Vagina (tissue), 2 donors: ENCODE measurements at regions of chr1 and their contacts with region 1.

Region 1: GRCh38 chr1:30618335-30618747 is 105.0 kb downstream of the MATN1 start:
- DNase-seq: no peak
- H3K4me3 ChIP-seq: no peak overlapping the region
- H3K27ac ChIP-seq: no peak overlapping the region
- H3K4me1 ChIP-seq: no peaks in the 10 kb centered on the region
- H3K27me3 ChIP-seq: no peaks in the 10 kb centered on the region
- CTCF ChIP-seq: no peak
- POLR2A ChIP-seq: no peak

Region 2: DNA sequence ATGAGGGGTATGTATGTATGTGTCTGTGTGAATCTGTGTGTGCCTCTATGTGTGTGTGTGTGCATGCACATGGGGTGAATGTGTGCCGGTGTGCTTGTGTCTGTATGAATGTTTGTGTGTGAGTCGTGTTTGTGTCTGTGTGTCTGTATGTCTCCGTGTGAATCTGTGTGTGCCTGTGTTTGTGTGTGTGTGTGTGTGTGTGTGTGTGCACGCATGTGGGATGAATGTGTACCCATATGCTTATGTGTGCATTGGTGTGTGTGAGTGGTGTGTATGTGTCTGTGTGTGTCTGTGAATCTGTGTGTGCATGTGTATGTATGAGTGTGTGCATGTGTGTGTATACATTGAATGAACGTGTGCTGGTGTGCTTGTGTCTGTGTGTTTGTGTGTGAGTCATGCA is 16.2 kb after region 1 on chr1:
- intact Hi-C with region 1: loop called (anchors 1 kb)
- DNase-seq: no peak
- H3K4me3 ChIP-seq: no peak overlapping the region
- H3K27ac ChIP-seq: no peak overlapping the region
- H3K4me1 ChIP-seq: no peaks in the 10 kb centered on the region
- H3K27me3 ChIP-seq: no peaks in the 10 kb centered on the region
- CTCF ChIP-seq: no peak
- POLR2A ChIP-seq: no peak